GM12878 (cell line): ENCODE measurements at regions of chr2 and their contacts with region 1.

Region 1: GRCh38 chr2:231674587-231675338 is 33.6 kb upstream of the PTMA start:
- DNase-seq: no peak
- ATAC-seq: peak; percentile 52
- H3K4me3 ChIP-seq: no peak overlapping the region
- H3K27ac ChIP-seq: peak overlapping the region; percentile 87
- H3K4me1 ChIP-seq: peaks cover 63% of the 10 kb centered on the region
- H3K27me3 ChIP-seq: no peaks in the 10 kb centered on the region
- CTCF ChIP-seq: peak; percentile 85 to 93 (median 87)
- EP300 ChIP-seq: 0 out of 4 replicates have a peak, but pooled peaks of 1 of the 2 experiments have one; percentile 20
- POLR2A ChIP-seq: no peak; the same call in 1 of the 2 replicates
- RAD21 ChIP-seq: peak; percentile 82

Region 2: DNA sequence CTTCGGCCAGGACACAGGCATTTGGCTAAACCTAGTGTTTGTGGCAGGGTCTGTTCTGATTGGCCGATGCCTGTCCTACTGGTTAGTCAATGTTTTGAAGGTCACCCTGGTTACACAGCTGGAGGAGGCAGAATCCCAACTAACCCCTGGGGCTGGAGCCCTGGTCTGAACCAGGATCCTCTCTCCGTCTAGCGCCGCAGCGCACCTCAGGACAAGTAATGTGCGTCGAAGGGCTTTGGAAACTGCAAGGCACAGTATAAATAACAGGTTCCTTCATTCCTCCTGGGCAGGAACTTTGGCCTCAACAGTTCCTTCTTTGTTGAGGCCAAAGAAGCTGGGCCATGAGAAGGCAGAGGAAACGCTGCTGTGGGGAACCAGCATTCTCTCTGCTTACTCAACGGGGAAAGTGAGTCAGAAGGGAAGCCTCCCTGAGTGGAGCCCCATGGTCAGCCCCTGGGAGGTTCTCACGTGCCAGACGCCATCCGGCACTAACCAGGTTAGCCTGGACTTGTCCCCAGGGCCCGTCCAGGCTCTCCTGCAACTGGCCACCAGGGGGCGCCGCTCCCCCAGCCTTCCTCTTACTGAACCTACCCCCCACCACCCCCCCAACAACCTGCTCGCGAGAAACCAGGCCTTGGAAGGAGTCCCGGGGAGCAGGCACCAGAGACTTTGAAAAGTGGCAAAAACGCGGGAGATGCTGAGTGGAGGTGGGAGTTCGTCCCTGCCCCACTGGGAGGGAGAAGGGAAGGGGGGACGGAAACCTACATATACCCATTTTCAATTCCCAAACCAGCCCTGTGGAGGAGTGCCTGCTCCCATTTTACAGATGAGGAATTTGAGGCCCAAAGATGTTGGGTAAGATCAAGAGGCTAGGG is 62.3 kb before region 1 on chr2:
- CTCF ChIA-PET with region 1: interaction called, 494 read pairs
- POLR2A ChIA-PET with region 1: interaction called, 247 read pairs
- RAD21 ChIA-PET with region 1: interaction called, 353 read pairs
- SMC1A ChIA-PET with region 1: interaction called, 255 read pairs
- in situ Hi-C with region 1: loop called (anchors 5 kb)
- intact Hi-C with region 1: loop called (anchors 1 kb)
- DNase-seq: peak; percentile 75
- ATAC-seq: peak; percentile 68
- H3K4me3 ChIP-seq: peak overlapping the region; percentile 78; the same call in 1 of the 2 replicates
- H3K27ac ChIP-seq: peak overlapping the region; percentile 99
- H3K4me1 ChIP-seq: peaks cover 29% of the 10 kb centered on the region
- H3K27me3 ChIP-seq: no peaks in the 10 kb centered on the region
- CTCF ChIP-seq: peak; percentile 93 to 96 (median 94)
- EP300 ChIP-seq: peak in 1 of 2 experiments; percentile 26; a peak in 1 of 4 replicates
- POLR2A ChIP-seq: 0 out of 2 replicates have a peak, but pooled peaks have one; percentile 26
- RAD21 ChIP-seq: peak; percentile 96

Region 3: GRCh38 chr2:231642631-231643494 is 31.9 kb before region 1 on chr2:
- CTCF ChIA-PET with region 1: interaction called, 262 read pairs
- POLR2A ChIA-PET with region 1: interaction called, 14 read pairs
- RAD21 ChIA-PET with region 1: interaction called, 86 read pairs
- SMC1A ChIA-PET with region 1: interaction called, 102 read pairs
- in situ Hi-C with region 1: no loop called
- intact Hi-C with region 1: loop called (anchors 1 kb)
- DNase-seq: peak; percentile 63
- ATAC-seq: peak; percentile 90
- H3K4me3 ChIP-seq: peak overlapping the region; percentile 63; the same call in 1 of the 2 replicates
- H3K27ac ChIP-seq: peak overlapping the region; percentile 56
- H3K4me1 ChIP-seq: peaks cover 14% of the 10 kb centered on the region
- H3K27me3 ChIP-seq: no peaks in the 10 kb centered on the region
- CTCF ChIP-seq: no peak
- EP300 ChIP-seq: no peak
- POLR2A ChIP-seq: no peak
- RAD21 ChIP-seq: no peak

Region 4: GRCh38 chr2:231662028-231662810 is 12.5 kb before region 1 on chr2:
- CTCF ChIA-PET with region 1: interaction called, 151 read pairs
- POLR2A ChIA-PET with region 1: interaction called, 95 read pairs
- RAD21 ChIA-PET with region 1: interaction called, 34 read pairs
- SMC1A ChIA-PET with region 1: interaction called, 20 read pairs
- in situ Hi-C with region 1: no loop called
- intact Hi-C with region 1: no loop called
- DNase-seq: peak; percentile 95
- ATAC-seq: peak; percentile 77
- H3K4me3 ChIP-seq: peak overlapping the region; percentile 56; the same call in 1 of the 2 replicates
- H3K27ac ChIP-seq: peak overlapping the region; percentile 92
- H3K4me1 ChIP-seq: peaks cover 36% of the 10 kb centered on the region
- H3K27me3 ChIP-seq: no peaks in the 10 kb centered on the region
- CTCF ChIP-seq: no peak
- EP300 ChIP-seq: peak; percentile 10 to 53; a peak in 1 of 4 replicates
- POLR2A ChIP-seq: peak; percentile 85
- RAD21 ChIP-seq: 0 out of 2 replicates have a peak, but pooled peaks have one; percentile 7

Region 5: DNA sequence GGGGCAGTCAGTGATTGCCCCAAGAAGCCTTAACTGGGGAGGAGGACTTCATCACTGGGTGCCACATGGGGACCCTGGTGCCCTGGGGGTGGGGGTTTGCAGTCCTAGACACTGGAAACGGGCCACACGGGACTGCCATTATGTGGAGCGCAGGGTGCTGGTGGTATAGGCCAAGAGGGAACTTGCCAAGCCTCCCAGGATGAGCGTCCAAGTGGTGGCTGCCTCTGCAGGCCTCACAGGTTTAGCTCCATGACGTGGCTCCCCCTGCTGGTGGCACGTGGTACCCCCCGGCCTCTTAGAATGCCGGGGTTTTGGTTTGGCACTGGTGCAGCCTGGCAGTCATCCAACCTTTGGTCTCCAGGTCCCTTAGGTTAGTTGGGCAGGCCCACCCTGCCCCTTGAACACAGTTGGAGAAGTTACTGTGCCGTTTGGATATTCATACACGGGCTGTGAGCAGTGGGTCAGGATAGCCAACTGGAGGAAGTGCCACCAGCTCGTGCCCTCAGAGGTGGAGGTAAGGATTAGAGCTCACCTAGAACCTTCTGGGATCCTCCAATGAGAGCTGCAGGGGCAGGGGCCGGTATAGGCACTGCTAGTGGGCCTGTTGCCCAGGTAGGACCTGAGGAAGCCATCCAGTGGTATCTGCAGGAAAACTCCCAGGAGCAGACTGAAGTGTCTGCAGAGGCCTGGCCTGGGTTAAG is 39.1 kb after region 1 on chr2:
- CTCF ChIA-PET with region 1: interaction called, 811 read pairs
- POLR2A ChIA-PET with region 1: interaction called, 102 read pairs
- RAD21 ChIA-PET with region 1: interaction called, 463 read pairs
- SMC1A ChIA-PET with region 1: interaction called, 343 read pairs
- in situ Hi-C with region 1: loop called (anchors 5 kb)
- intact Hi-C with region 1: loop called (anchors 1 kb)
- DNase-seq: peak; percentile 56
- ATAC-seq: peak; percentile 58
- H3K4me3 ChIP-seq: 0 out of 2 replicates have a peak overlapping the region, but pooled peaks have one; percentile 15
- H3K27ac ChIP-seq: 0 out of 2 replicates have a peak overlapping the region, but pooled peaks have one; percentile 7
- H3K4me1 ChIP-seq: peaks cover 20% of the 10 kb centered on the region
- H3K27me3 ChIP-seq: no peaks in the 10 kb centered on the region
- CTCF ChIP-seq: peak; percentile 92 to 95 (median 95)
- EP300 ChIP-seq: no peak
- POLR2A ChIP-seq: no peak
- RAD21 ChIP-seq: peak; percentile 49

Region 6: DNA sequence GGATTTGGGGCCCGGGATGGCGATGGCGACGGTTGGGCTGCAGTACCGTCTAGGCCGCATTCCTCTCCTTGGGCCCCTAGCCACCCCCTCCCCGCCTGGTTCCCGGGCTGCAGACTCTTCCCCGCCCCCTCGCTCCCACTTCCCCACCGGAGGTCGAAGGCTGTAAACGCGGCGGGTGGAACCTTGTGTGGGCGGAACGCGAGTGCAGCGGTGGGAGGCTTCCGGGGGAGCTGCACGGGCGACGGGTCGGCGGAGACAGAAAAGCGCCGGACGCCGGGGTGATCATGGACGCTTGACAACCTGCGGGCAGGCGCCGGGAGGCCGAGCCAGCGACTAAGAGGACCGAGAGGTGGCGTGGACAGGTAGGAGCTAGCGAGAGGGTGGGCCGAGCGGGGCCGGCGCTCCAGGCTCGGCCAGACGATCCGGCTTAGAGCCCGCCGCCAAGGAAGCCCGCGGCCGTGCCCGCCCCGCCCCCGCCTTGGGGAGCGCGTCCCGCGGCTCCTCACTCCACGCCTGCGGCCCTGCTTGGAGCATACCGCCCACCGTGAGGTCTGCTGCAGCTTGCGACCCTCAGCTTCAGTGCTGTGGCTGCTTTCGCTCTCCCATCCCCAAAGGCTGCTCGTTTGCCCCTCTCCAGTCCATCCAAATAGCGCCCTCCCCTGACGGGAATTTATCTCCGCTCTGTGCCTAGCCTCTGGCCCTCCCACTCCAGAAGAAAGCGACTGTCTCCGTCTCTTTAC is 111.6 kb after region 1 on chr2 and contains the start of gene COPS7B:
- CTCF ChIA-PET with region 1: interaction called, 31 read pairs
- POLR2A ChIA-PET with region 1: interaction called, 6 read pairs
- RAD21 ChIA-PET with region 1: interaction called, 9 read pairs
- SMC1A ChIA-PET with region 1: interaction called, 20 read pairs
- in situ Hi-C with region 1: no loop called
- intact Hi-C with region 1: loop called (anchors 2 kb)
- DNase-seq: peak; percentile 35
- ATAC-seq: peak; percentile 83
- H3K4me3 ChIP-seq: peak within 1 kb of the TSS; percentile 91
- H3K27ac ChIP-seq: peak within 1 kb of the TSS; percentile 71
- H3K4me1 ChIP-seq: peaks cover 13% of the 10 kb centered on the region
- H3K27me3 ChIP-seq: no peaks in the 10 kb centered on the region
- CTCF ChIP-seq: peak; percentile 42 to 58 (median 46); a peak in 4 of 6 replicates
- EP300 ChIP-seq: peak; percentile 12 to 63; a peak in 1 of 4 replicates
- POLR2A ChIP-seq: peak; percentile 78
- RAD21 ChIP-seq: peak; percentile 40; the same call in 1 of the 2 replicates
- polyA plus RNA-seq, gene COPS7B: 6.3 to 9.6 TPM